Uterus (tissue), 4 donors: ENCODE measurements at regions of chr19 and their contacts with region 1.

Region 1: GRCh38 chr19:48965040-48965805 is at the start of gene FTL:
- DNase-seq: peak; percentile 98
- H3K4me3 ChIP-seq: peak within 1 kb of the TSS; percentile 77 to 81
- H3K27ac ChIP-seq: peak within 1 kb of the TSS; percentile 97 to 99
- H3K4me1 ChIP-seq: peaks cover 0 to 23% of the 10 kb centered on the region in 2 donors
- H3K27me3 ChIP-seq: no peaks in the 10 kb centered on the region
- CTCF ChIP-seq: peak in 1 of 4 experiments; percentile 27
- POLR2A ChIP-seq: peak; percentile 99
- total RNA-seq, gene FTL: 472 to 2,968 (median 1,570) TPM

Region 2: GRCh38 chr19:48899781-48900476 is 65.3 kb before region 1 on chr19 and contains the start of gene NUCB1:
- intact Hi-C with region 1: loop called (anchors 10 kb)
- DNase-seq: peak; percentile 100
- H3K4me3 ChIP-seq: peak within 1 kb of the TSS; percentile 67 to 89
- H3K27ac ChIP-seq: peak within 1 kb of the TSS; percentile 89 to 98
- H3K4me1 ChIP-seq: peaks cover 0 to 9% of the 10 kb centered on the region in 2 donors
- H3K27me3 ChIP-seq: no peaks in the 10 kb centered on the region
- CTCF ChIP-seq: peak; percentile 21 to 57 (median 34)
- POLR2A ChIP-seq: peak; percentile 68 to 73
- total RNA-seq, gene NUCB1: 98.5 to 211 (median 173) TPM